Transverse colon (tissue), 4 donors: ENCODE measurements at regions of chr7 and their contacts with region 1.

Region 1: GRCh38 chr7:116271963-116272839 is 61.9 kb downstream of the TES start:
- DNase-seq: peak; percentile 21
- H3K4me3 ChIP-seq: no peak overlapping the region
- H3K27ac ChIP-seq: peak overlapping the region; percentile 74 to 83 (median 80)
- H3K4me1 ChIP-seq: peaks cover 11 to 45% (median 25%) of the 10 kb centered on the region in 4 donors
- H3K27me3 ChIP-seq: no peaks in the 10 kb centered on the region
- CTCF ChIP-seq: no peak
- EP300 ChIP-seq: peak; percentile 81
- POLR2A ChIP-seq: no peak

Region 2: GRCh38 chr7:115924411-115924810 is 347.8 kb before region 1 on chr7:
- in situ Hi-C with region 1: no loop called
- intact Hi-C with region 1: no loop called
- DNase-seq: no peak
- H3K4me3 ChIP-seq: no peak overlapping the region
- H3K27ac ChIP-seq: no peak overlapping the region
- H3K4me1 ChIP-seq: peaks cover 0 to 6% (median 4%) of the 10 kb centered on the region in 4 donors
- H3K27me3 ChIP-seq: no peaks in the 10 kb centered on the region
- CTCF ChIP-seq: no peak
- EP300 ChIP-seq: no peak
- POLR2A ChIP-seq: no peak

Region 3: GRCh38 chr7:116327752-116328151 is 55.6 kb after region 1 on chr7:
- in situ Hi-C with region 1: no loop called
- intact Hi-C with region 1: no loop called
- DNase-seq: no peak
- H3K4me3 ChIP-seq: no peak overlapping the region
- H3K27ac ChIP-seq: peak overlapping the region in 2 of 4 donors; percentile 7 to 8
- H3K4me1 ChIP-seq: no peaks in the 10 kb centered on the region
- H3K27me3 ChIP-seq: no peaks in the 10 kb centered on the region
- CTCF ChIP-seq: no peak
- EP300 ChIP-seq: no peak
- POLR2A ChIP-seq: no peak

Region 4: GRCh38 chr7:116354546-116355408 is 82.6 kb after region 1 on chr7:
- in situ Hi-C with region 1: no loop called
- intact Hi-C with region 1: loop called (anchors 1 kb)
- DNase-seq: peak; percentile 28
- H3K4me3 ChIP-seq: no peak overlapping the region
- H3K27ac ChIP-seq: peak overlapping the region; percentile 76 to 88 (median 82)
- H3K4me1 ChIP-seq: peaks cover 0 to 37% (median 8%) of the 10 kb centered on the region in 4 donors
- H3K27me3 ChIP-seq: no peaks in the 10 kb centered on the region
- CTCF ChIP-seq: no peak
- EP300 ChIP-seq: no peak
- POLR2A ChIP-seq: no peak